ENCODE measurements at regions of chr3 and their contacts with region 1.

Region 1: GRCh38 chr3:66998113-66998903 is at the start of gene KBTBD8:
- DNase-seq: peak; percentile 99
- H3K4me3 Mint-ChIP-seq: peak within 1 kb of the TSS; percentile 92
- H3K27ac Mint-ChIP-seq: peak within 1 kb of the TSS; percentile 92
- H3K4me1 Mint-ChIP-seq: peaks cover 37% of the 10 kb centered on the region
- H3K27me3 Mint-ChIP-seq: peaks cover 9% of the 10 kb centered on the region
- total RNA-seq, gene KBTBD8: 13.5 to 15.5 TPM

Region 2: DNA sequence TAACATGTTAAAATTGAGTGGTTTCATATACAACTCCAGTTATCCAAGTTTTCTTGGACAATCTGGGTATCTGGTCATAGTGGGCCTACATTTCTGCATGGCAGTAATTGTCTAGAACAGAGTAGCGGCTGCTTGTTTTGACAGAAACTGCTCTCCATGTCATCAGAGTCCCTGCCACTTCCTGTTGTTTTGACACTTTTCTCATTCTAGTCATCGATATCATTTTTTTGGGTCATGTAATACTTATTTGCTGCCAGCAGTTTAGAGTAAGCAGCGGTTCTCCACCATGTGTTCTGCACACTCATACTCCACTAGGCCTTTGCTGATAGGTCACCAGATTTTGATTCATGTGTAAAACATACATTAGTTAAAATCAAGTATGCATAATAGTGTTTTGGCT is 696.0 kb before region 1 on chr3:
- CTCF ChIA-PET with region 1: no interaction called
- POLR2A ChIA-PET with region 1: no interaction called
- intact Hi-C with region 1: loop called (anchors 2 kb)
- DNase-seq: peak; percentile 62
- H3K4me3 Mint-ChIP-seq: peak overlapping the region; percentile 23
- H3K27ac Mint-ChIP-seq: peak overlapping the region; percentile 98
- H3K4me1 Mint-ChIP-seq: peaks cover 72% of the 10 kb centered on the region
- H3K27me3 Mint-ChIP-seq: no peaks in the 10 kb centered on the region

Region 3: DNA sequence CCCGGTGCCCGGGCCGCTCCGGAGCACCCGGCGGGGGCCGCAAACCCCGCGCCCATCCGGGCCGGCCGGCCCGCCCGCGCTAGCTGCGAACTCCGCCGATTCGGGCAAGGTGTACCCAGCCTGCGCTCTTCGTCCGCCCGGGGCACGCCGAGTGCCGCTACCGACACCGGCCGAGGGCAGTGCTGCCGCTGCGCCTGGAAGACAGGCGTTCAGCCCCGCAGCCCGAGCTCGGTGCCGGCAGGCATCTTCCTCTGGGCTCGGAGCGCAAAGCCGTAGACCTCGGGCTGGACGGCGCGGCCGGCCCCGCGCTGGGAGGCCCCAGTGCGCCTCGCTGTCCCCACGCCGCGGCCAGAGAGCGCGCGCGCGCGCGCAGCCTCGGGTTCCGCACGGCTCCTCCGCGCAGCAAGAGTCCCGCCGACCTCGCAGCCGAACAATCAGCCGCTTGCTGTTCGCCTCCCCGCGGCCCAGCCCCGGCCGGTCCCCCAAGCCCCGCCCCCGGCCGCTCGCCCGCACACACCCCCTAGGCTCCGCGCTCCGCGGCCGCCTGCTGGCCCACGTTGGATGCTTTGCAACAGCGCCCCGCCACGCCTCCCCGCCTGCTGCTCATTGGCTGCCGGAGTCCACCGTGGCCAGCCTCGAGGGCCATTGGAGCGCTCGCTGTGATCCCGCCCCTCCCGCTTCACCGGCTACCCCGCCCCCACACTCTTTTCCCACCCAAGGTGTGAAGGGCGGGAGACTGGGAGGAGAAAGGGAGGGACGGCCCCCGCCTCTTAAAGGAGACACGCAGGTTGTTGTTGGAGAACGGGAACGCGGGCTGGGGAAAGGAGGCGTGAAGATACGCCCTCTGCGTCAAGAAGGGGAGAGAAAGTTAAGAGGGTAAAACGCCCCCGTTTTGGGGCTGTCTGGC is 497.5 kb before region 1 on chr3 and contains the start of gene LRIG1:
- CTCF ChIA-PET with region 1: no interaction called
- POLR2A ChIA-PET with region 1: no interaction called
- intact Hi-C with region 1: loop called (anchors 2 kb)
- DNase-seq: peak; percentile 99
- H3K4me3 Mint-ChIP-seq: peak within 1 kb of the TSS; percentile 96
- H3K27ac Mint-ChIP-seq: peak within 1 kb of the TSS; percentile 91
- H3K4me1 Mint-ChIP-seq: peaks cover 53% of the 10 kb centered on the region
- H3K27me3 Mint-ChIP-seq: no peaks in the 10 kb centered on the region
- total RNA-seq, gene LRIG1: 35.3 to 40.4 TPM

Region 4: GRCh38 chr3:66957367-66957766 is 40.9 kb before region 1 on chr3:
- CTCF ChIA-PET with region 1: no interaction called
- POLR2A ChIA-PET with region 1: no interaction called
- intact Hi-C with region 1: no loop called
- DNase-seq: no peak
- H3K4me3 Mint-ChIP-seq: no peak overlapping the region
- H3K27ac Mint-ChIP-seq: no peak overlapping the region
- H3K4me1 Mint-ChIP-seq: no peaks in the 10 kb centered on the region
- H3K27me3 Mint-ChIP-seq: peaks cover 4% of the 10 kb centered on the region

Region 5: GRCh38 chr3:67083277-67083676 is 85.0 kb after region 1 on chr3:
- CTCF ChIA-PET with region 1: no interaction called
- POLR2A ChIA-PET with region 1: no interaction called
- intact Hi-C with region 1: loop called (anchors 1 kb)
- DNase-seq: peak; percentile 71
- H3K4me3 Mint-ChIP-seq: peak overlapping the region; percentile 20
- H3K27ac Mint-ChIP-seq: peak overlapping the region; percentile 83
- H3K4me1 Mint-ChIP-seq: peaks cover 21% of the 10 kb centered on the region
- H3K27me3 Mint-ChIP-seq: no peaks in the 10 kb centered on the region

Region 6: DNA sequence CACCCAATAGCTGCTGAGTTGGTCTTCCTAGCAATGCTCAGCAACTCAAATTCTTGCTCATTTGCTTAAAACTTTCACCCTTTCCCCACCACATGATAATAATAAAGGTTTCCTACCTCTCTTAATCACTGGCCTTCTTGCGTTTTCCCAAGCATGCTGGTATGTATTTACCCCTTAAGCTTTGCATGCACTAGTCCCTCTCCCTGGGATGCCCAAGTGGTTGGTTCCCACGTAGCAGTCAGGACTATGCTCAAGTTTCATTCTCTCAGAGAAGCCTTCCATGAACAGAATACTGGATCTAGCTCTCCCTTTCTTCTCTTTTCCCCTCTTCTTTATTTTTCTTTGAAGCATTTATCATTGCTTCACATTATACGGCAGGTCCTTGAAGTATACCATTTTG is 108.6 kb after region 1 on chr3:
- CTCF ChIA-PET with region 1: no interaction called
- POLR2A ChIA-PET with region 1: no interaction called
- intact Hi-C with region 1: no loop called
- DNase-seq: no peak
- H3K4me3 Mint-ChIP-seq: no peak overlapping the region
- H3K27ac Mint-ChIP-seq: no peak overlapping the region
- H3K4me1 Mint-ChIP-seq: no peaks in the 10 kb centered on the region
- H3K27me3 Mint-ChIP-seq: peaks cover 5% of the 10 kb centered on the region

Region 7: DNA sequence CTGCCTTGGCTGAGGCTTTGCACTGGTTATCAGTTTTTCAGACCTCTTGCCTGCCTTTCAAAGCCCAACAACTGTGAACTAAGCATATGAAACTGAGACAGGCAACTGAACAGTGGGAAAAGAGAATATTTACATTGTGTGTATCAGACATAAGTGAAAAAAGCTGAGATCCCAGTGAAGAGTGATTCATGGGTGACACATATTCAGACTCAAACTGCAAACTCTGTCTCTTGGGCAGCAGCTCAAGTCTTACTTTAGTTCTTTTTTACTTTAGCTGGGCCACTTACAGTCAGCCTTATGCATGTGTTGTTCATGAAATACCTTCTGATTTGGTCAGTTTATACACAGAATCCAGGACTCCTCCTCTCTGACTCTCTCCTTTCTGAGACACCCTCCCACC is 636.9 kb after region 1 on chr3:
- CTCF ChIA-PET with region 1: no interaction called
- POLR2A ChIA-PET with region 1: interaction called, 5 read pairs
- intact Hi-C with region 1: loop called (anchors 1 kb)
- DNase-seq: peak; percentile 29
- H3K4me3 Mint-ChIP-seq: no peak overlapping the region
- H3K27ac Mint-ChIP-seq: peak overlapping the region; percentile 67
- H3K4me1 Mint-ChIP-seq: peaks cover 66% of the 10 kb centered on the region
- H3K27me3 Mint-ChIP-seq: no peaks in the 10 kb centered on the region

Region 8: GRCh38 chr3:68249265-68249664 is 1251.0 kb after region 1 on chr3:
- CTCF ChIA-PET with region 1: no interaction called
- POLR2A ChIA-PET with region 1: no interaction called
- intact Hi-C with region 1: loop called (anchors 1 kb)
- DNase-seq: peak; percentile 44
- H3K4me3 Mint-ChIP-seq: no peak overlapping the region
- H3K27ac Mint-ChIP-seq: no peak overlapping the region
- H3K4me1 Mint-ChIP-seq: peaks cover 4% of the 10 kb centered on the region
- H3K27me3 Mint-ChIP-seq: no peaks in the 10 kb centered on the region